ENCODE measurements at regions of chr2 and their contacts with region 1.

Region 1: DNA sequence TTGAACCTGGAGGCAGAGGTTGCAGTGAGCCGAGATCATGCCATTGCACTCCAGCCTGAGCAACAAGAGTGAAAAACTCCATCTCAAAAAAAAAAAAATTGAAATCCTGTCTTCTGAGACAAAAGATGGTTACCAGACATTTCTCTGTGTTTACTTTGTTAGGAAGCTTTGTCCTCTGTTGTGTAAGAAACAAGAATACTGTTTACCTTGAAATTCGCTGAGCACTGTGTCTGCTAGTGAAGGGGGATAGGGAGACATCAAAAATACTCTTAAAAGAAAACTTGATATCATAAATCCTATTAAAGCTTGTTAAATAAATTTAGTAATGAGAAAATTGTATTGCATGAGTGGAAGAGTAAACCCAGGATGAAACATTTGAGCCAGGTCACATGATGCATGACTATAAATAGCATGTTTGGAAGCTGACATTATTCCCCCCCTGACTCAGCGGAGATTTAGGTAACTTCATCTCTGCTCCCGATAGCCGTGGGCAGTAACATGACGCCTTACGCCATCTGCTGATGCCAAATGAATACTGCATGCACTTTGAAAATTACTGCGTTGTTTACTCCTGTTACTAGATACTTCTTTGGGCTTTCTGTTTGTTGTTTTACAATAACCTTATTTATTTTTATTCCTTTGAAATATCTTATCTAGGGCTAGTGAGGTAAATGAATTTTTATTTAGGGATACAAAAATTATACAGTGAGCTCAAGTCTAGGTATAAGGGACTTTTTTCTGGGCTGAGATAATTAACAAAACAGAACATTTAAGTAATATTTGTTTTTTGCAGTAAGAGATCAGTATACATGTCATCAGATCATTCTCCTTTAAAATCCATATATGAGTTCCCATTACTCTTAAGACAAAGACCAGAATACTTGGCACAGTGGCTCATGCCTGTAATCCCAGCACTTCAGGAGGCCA is 134.9 kb downstream of the MAP3K20 start:
- DNase-seq: peak; percentile 58
- H3K4me3 Mint-ChIP-seq: no peak overlapping the region
- H3K27ac Mint-ChIP-seq: no peak overlapping the region
- H3K4me1 Mint-ChIP-seq: no peaks in the 10 kb centered on the region
- H3K27me3 Mint-ChIP-seq: peaks cover 8% of the 10 kb centered on the region

Region 2: DNA sequence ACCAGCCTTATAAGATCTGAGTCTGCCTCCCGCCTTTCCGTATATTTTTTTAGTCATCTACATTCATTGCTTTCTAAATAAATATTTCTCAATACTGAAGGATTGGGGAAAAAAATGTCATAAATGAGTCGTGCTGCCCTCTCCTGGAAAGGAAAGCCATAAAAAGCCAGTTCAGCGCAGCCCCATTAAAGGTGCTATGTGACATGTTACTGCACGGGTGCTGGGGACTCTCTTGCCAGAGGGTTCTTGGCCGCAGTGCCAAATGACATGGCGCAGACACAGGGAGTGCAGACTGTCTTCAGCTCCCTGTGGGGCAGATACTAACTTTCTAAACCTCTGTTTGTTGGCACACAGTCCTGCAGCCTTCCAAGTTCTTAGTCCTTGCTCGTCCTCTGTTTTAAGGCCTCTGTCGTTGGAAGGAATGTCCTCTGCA is 188.6 kb before region 1 on chr2:
- CTCF ChIA-PET with region 1: interaction called, 392 read pairs
- POLR2A ChIA-PET with region 1: no interaction called
- intact Hi-C with region 1: loop called (anchors 1 kb)
- DNase-seq: no peak
- H3K4me3 Mint-ChIP-seq: no peak overlapping the region
- H3K27ac Mint-ChIP-seq: no peak overlapping the region
- H3K4me1 Mint-ChIP-seq: no peaks in the 10 kb centered on the region
- H3K27me3 Mint-ChIP-seq: peaks cover 10% of the 10 kb centered on the region

Region 3: GRCh38 chr2:173075781-173076580 is 134.6 kb before region 1 on chr2 and contains the start of gene MAP3K20:
- CTCF ChIA-PET with region 1: interaction called, 11 read pairs
- POLR2A ChIA-PET with region 1: no interaction called
- intact Hi-C with region 1: loop called (anchors 2 kb)
- DNase-seq: peak; percentile 60
- H3K4me3 Mint-ChIP-seq: peak within 1 kb of the TSS; percentile 72
- H3K27ac Mint-ChIP-seq: no peak within 1 kb of the TSS
- H3K4me1 Mint-ChIP-seq: peaks cover 14% of the 10 kb centered on the region
- H3K27me3 Mint-ChIP-seq: peaks cover 34% of the 10 kb centered on the region
- total RNA-seq, gene MAP3K20: 6.5 to 7.0 TPM

Region 4: GRCh38 chr2:173749315-173749714 is 538.8 kb after region 1 on chr2:
- CTCF ChIA-PET with region 1: no interaction called
- POLR2A ChIA-PET with region 1: no interaction called
- intact Hi-C with region 1: no loop called
- DNase-seq: no peak
- H3K4me3 Mint-ChIP-seq: no peak overlapping the region
- H3K27ac Mint-ChIP-seq: no peak overlapping the region
- H3K4me1 Mint-ChIP-seq: no peaks in the 10 kb centered on the region
- H3K27me3 Mint-ChIP-seq: peaks cover 7% of the 10 kb centered on the region

Measured in activated CD4-positive, alpha-beta memory T cell treated with anti-CD3 and anti-CD28 coated beads for 36 hours (primary cell).